Heart left ventricle (tissue), 16 donors: ENCODE measurements at regions of chr7 and their contacts with region 1.

Region 1: GRCh38 chr7:151570366-151570915 is 50.7 kb upstream of the RHEB start:
- DNase-seq: no peak
- ATAC-seq: no peak
- H3K4me3 ChIP-seq: no peak overlapping the region
- H3K27ac ChIP-seq: no peak overlapping the region
- H3K4me1 ChIP-seq: peaks cover 0 to 14% (median 6%) of the 10 kb centered on the region in 12 donors
- H3K27me3 ChIP-seq: no peaks in the 10 kb centered on the region
- CTCF ChIP-seq: peak in 11 of 12 donors; percentile 22 to 65 (median 44)
- POLR2A ChIP-seq: no peak

Region 2: GRCh38 chr7:151472644-151473380 is 97.6 kb before region 1 on chr7:
- intact Hi-C with region 1: no loop called
- DNase-seq: no peak
- ATAC-seq: peak; percentile 33 to 73 (median 66)
- H3K4me3 ChIP-seq: no peak overlapping the region
- H3K27ac ChIP-seq: peak overlapping the region in 7 of 12 donors; percentile 21 to 51 (median 32)
- H3K4me1 ChIP-seq: peaks cover 0 to 34% (median 15%) of the 10 kb centered on the region in 12 donors
- H3K27me3 ChIP-seq: no peaks in the 10 kb centered on the region
- CTCF ChIP-seq: no peak
- POLR2A ChIP-seq: no peak

Region 3: DNA sequence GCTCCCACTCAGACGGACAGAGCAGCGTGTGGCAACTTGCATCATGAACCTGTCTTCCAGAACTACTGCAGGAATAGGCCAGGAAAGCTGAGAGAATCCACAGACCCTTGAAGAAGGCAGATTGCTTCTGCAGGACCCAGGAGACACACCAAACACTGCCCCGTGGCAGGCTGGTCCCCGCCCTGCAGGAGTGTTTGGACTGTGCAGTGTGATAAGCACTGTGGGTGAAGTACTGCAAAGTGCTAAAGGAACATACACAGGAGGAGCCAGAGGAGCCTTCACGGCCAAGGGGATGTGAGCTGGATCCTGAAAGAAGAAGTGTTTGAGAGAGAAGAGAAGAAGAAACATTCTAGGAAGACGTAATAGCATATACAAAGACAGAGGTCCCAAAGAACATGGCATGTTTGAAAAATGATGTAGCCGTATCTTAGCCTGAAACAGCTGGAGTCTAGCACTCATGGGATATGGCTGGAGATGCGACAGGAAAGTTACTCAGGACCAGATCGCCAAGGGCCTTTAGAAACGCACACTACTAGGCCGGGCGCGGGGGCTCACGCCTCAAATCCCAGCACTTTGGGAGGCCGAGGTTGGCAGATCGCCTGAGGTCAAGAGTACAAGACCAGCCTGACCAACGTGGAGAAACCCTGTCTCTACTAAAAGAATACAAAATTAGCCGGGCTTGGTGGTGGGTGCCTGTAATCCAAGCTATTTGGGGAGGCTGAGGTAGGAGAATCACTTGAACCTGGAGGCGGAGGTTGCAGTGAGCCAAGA is 46.2 kb after region 1 on chr7:
- intact Hi-C with region 1: loop called in 1 of 10 experiments (anchors 10 kb)
- DNase-seq: no peak
- ATAC-seq: peak; percentile 37 to 73 (median 59)
- H3K4me3 ChIP-seq: no peak overlapping the region
- H3K27ac ChIP-seq: peak overlapping the region in 1 of 12 donors; percentile 37
- H3K4me1 ChIP-seq: peaks cover 0 to 15% (median 9%) of the 10 kb centered on the region in 12 donors
- H3K27me3 ChIP-seq: no peaks in the 10 kb centered on the region
- CTCF ChIP-seq: no peak
- POLR2A ChIP-seq: no peak

Region 4: GRCh38 chr7:151705636-151706276 is 135.3 kb after region 1 on chr7:
- intact Hi-C with region 1: loop called in 2 of 10 experiments (anchors 10 kb)
- DNase-seq: peak in 1 of 5 donors; percentile 38
- ATAC-seq: peak; percentile 29 to 68 (median 52)
- H3K4me3 ChIP-seq: peak overlapping the region in 6 of 12 donors; percentile 3 to 41 (median 19)
- H3K27ac ChIP-seq: peak overlapping the region in 6 of 12 donors; percentile 2 to 88 (median 24)
- H3K4me1 ChIP-seq: peaks cover 0 to 50% (median 17%) of the 10 kb centered on the region in 12 donors
- H3K27me3 ChIP-seq: no peaks in the 10 kb centered on the region
- CTCF ChIP-seq: peak in 11 of 12 donors; percentile 34 to 67 (median 56)
- POLR2A ChIP-seq: no peak